B cell (primary cell): ENCODE measurements at regions of chr1 and their contacts with region 1.

Region 1: GRCh38 chr1:181142096-181142958 is 53.8 kb downstream of the IER5 start:
- DNase-seq: peak; percentile 89
- ATAC-seq: peak; percentile 97
- H3K4me3 ChIP-seq: no peak overlapping the region
- H3K4me3 Mint-ChIP-seq: peak overlapping the region; percentile 69
- H3K27ac ChIP-seq: no peak overlapping the region
- H3K27ac Mint-ChIP-seq: peak overlapping the region; percentile 60
- H3K4me1 ChIP-seq: peaks cover 36 to 41% of the 10 kb centered on the region in 2 donors
- H3K4me1 Mint-ChIP-seq: peaks cover 51% of the 10 kb centered on the region
- H3K27me3 ChIP-seq: no peaks in the 10 kb centered on the region
- H3K27me3 Mint-ChIP-seq: no peaks in the 10 kb centered on the region
- CTCF ChIP-seq: peak; percentile 96

Region 2: GRCh38 chr1:179781962-179782361 is 1360.4 kb before region 1 on chr1:
- CTCF ChIA-PET with region 1: no interaction called
- POLR2A ChIA-PET with region 1: no interaction called
- intact Hi-C with region 1: no loop called
- DNase-seq: no peak
- ATAC-seq: no peak
- H3K4me3 ChIP-seq: no peak overlapping the region
- H3K4me3 Mint-ChIP-seq: no peak overlapping the region
- H3K27ac ChIP-seq: no peak overlapping the region
- H3K27ac Mint-ChIP-seq: no peak overlapping the region
- H3K4me1 ChIP-seq: no peaks in the 10 kb centered on the region
- H3K4me1 Mint-ChIP-seq: no peaks in the 10 kb centered on the region
- H3K27me3 ChIP-seq: peaks cover 0 to 3% (median 1%) of the 10 kb centered on the region in 4 experiments
- H3K27me3 Mint-ChIP-seq: peaks cover 21% of the 10 kb centered on the region
- CTCF ChIP-seq: no peak

Region 3: DNA sequence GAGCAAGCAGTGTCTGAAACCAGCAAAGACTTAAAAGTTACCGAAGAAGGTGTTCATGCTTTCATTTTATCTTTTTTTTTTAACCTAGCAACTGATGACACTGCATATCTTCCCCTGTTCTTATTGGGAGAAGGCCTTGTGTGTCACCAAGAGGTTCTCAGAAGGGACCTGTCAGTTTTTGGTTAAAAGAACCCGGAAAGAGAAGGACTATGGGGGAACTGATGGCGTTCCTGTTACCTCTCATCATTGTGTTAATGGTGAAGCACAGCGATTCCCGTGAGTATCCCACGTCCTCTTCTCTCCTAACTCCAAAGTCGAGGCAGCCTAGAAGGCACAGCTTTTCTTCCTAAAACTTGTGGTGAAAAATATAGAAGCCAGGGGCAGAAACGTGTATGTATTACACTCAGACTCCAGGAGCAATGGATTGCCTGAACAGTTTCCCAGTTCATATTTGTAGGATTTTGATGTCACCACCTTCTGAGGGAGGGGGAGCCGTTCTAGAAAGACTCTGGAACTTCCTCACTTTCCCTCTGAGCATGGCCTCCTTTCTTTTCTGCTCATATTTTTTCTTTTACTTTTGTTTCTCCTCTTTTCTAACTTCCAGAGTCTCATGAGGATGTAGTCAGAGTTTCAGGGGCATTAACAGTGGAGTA is 108.4 kb before region 1 on chr1 and contains the start of gene MR1:
- CTCF ChIA-PET with region 1: interaction called, 119 read pairs
- POLR2A ChIA-PET with region 1: interaction called, 3 read pairs
- intact Hi-C with region 1: loop called (anchors 1 kb)
- DNase-seq: peak; percentile 92
- ATAC-seq: peak; percentile 97
- H3K4me3 ChIP-seq: peak within 1 kb of the TSS; percentile 77 to 94 (median 90)
- H3K4me3 Mint-ChIP-seq: peak within 1 kb of the TSS; percentile 95
- H3K27ac ChIP-seq: peak within 1 kb of the TSS; percentile 94 to 96
- H3K27ac Mint-ChIP-seq: peak within 1 kb of the TSS; percentile 93
- H3K4me1 ChIP-seq: peaks cover 39 to 49% of the 10 kb centered on the region in 2 donors
- H3K4me1 Mint-ChIP-seq: peaks cover 54% of the 10 kb centered on the region
- H3K27me3 ChIP-seq: no peaks in the 10 kb centered on the region
- H3K27me3 Mint-ChIP-seq: no peaks in the 10 kb centered on the region
- CTCF ChIP-seq: no peak
- total RNA-seq, gene MR1: 26.1 and 28.2 TPM in 2 replicates

Region 4: DNA sequence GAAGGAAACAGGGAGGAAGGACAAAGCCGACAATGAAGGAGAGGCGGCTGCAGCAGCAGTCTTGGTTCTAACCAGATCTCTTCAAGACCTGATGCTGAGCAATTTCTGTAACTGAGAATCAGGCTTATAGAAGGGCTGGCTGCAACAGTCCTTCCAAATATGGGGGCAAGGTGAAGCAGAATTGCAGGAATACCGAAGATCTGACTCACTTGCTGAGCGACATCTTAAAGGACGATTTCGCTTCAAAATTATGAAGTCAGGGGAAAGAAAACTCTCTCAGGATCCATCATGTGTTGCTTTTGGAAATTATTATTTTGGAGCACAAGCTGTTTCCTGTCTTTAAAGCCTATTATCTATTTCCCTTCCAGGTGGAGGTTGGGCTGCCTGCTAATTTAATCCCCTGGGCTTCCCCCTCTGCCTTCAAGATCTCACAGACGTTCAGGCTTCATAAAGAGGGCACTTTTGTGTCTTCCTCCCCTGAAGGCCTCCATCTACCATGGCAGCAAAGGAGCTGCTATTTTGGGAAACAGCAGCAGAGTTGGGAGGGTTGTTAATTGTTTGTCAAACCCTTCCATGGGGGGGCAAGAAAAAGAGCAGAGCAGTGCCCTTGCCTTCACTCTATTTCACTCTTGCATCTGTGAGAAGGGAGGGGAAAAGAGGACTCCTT is 64.6 kb before region 1 on chr1:
- CTCF ChIA-PET with region 1: interaction called, 672 read pairs
- POLR2A ChIA-PET with region 1: no interaction called
- intact Hi-C with region 1: no loop called
- DNase-seq: no peak
- ATAC-seq: no peak
- H3K4me3 ChIP-seq: no peak overlapping the region
- H3K4me3 Mint-ChIP-seq: no peak overlapping the region
- H3K27ac ChIP-seq: no peak overlapping the region
- H3K27ac Mint-ChIP-seq: no peak overlapping the region
- H3K4me1 ChIP-seq: peaks cover 4% of the 10 kb centered on the region in 2 donors
- H3K4me1 Mint-ChIP-seq: peaks cover 4% of the 10 kb centered on the region
- H3K27me3 ChIP-seq: peaks cover 0 to 7% (median 0%) of the 10 kb centered on the region in 4 experiments
- H3K27me3 Mint-ChIP-seq: peaks cover 29% of the 10 kb centered on the region
- CTCF ChIP-seq: no peak

Region 5: GRCh38 chr1:181117638-181118449 is 24.5 kb before region 1 on chr1:
- CTCF ChIA-PET with region 1: interaction called, 14 read pairs
- POLR2A ChIA-PET with region 1: interaction called, 3 read pairs
- intact Hi-C with region 1: no loop called
- DNase-seq: no peak
- ATAC-seq: no peak
- H3K4me3 ChIP-seq: no peak overlapping the region
- H3K4me3 Mint-ChIP-seq: no peak overlapping the region
- H3K27ac ChIP-seq: no peak overlapping the region
- H3K27ac Mint-ChIP-seq: peak overlapping the region; percentile 7
- H3K4me1 ChIP-seq: peaks cover 14% of the 10 kb centered on the region in 2 donors
- H3K4me1 Mint-ChIP-seq: peaks cover 20% of the 10 kb centered on the region
- H3K27me3 ChIP-seq: no peaks in the 10 kb centered on the region
- H3K27me3 Mint-ChIP-seq: no peaks in the 10 kb centered on the region
- CTCF ChIP-seq: no peak

Region 6: GRCh38 chr1:181160998-181161870 is 18.9 kb after region 1 on chr1:
- CTCF ChIA-PET with region 1: interaction called, 72 read pairs
- POLR2A ChIA-PET with region 1: no interaction called
- intact Hi-C with region 1: loop called (anchors 1 kb)
- DNase-seq: no peak
- ATAC-seq: no peak
- H3K4me3 ChIP-seq: no peak overlapping the region
- H3K4me3 Mint-ChIP-seq: no peak overlapping the region
- H3K27ac ChIP-seq: no peak overlapping the region
- H3K27ac Mint-ChIP-seq: no peak overlapping the region
- H3K4me1 ChIP-seq: peaks cover 6 to 15% of the 10 kb centered on the region in 2 donors
- H3K4me1 Mint-ChIP-seq: peaks cover 8% of the 10 kb centered on the region
- H3K27me3 ChIP-seq: peaks cover 0 to 2% (median 0%) of the 10 kb centered on the region in 4 experiments
- H3K27me3 Mint-ChIP-seq: no peaks in the 10 kb centered on the region
- CTCF ChIP-seq: no peak

Region 7: GRCh38 chr1:181219938-181220337 is 77.6 kb after region 1 on chr1:
- CTCF ChIA-PET with region 1: no interaction called
- POLR2A ChIA-PET with region 1: no interaction called
- intact Hi-C with region 1: no loop called
- DNase-seq: no peak
- ATAC-seq: no peak
- H3K4me3 ChIP-seq: no peak overlapping the region
- H3K4me3 Mint-ChIP-seq: no peak overlapping the region
- H3K27ac ChIP-seq: no peak overlapping the region
- H3K27ac Mint-ChIP-seq: no peak overlapping the region
- H3K4me1 ChIP-seq: no peaks in the 10 kb centered on the region
- H3K4me1 Mint-ChIP-seq: no peaks in the 10 kb centered on the region
- H3K27me3 ChIP-seq: peaks cover 0 to 4% (median 0%) of the 10 kb centered on the region in 4 experiments
- H3K27me3 Mint-ChIP-seq: peaks cover 40% of the 10 kb centered on the region
- CTCF ChIP-seq: no peak